Activated CD4-positive, alpha-beta memory T cell treated with anti-CD3 and anti-CD28 coated beads for 36 hours (primary cell): ENCODE measurements at regions of chr15 and their contacts with region 1.

Region 1: DNA sequence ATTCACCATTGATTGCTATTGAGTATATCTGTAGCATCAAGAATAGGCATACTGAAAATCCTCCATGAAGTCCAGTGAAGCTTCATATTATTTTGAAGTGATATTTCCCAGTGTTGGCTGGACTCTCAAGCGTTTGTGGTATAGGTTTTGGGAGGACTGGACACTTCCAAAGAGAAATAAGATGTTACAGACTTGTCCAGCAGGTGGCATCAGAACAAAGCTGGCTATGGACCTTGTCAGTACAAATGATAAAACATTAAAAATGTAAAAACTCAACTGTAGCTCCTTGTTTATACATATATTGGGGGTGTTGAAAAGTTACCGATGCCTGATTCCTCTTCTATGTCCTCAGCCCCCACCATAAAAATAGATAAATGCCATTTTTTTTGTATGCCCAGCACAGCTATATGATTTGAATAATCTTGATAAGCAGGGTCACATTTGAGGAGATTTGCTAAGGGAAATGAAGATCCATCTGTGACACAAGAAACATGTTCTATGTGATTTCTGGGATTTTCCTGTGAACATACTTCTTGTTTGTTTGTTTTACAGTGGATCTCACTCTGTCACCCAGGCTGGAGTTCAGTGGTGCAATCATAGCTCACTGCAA is 54.5 kb upstream of the GOLGA6B start:
- DNase-seq: peak; percentile 21
- H3K4me3 Mint-ChIP-seq: no peak overlapping the region
- H3K27ac Mint-ChIP-seq: no peak overlapping the region
- H3K4me1 Mint-ChIP-seq: no peaks in the 10 kb centered on the region
- H3K27me3 Mint-ChIP-seq: no peaks in the 10 kb centered on the region

Region 2: GRCh38 chr15:72584006-72584405 is 16.0 kb before region 1 on chr15:
- CTCF ChIA-PET with region 1: interaction called, 33 read pairs
- POLR2A ChIA-PET with region 1: no interaction called
- intact Hi-C with region 1: no loop called
- DNase-seq: no peak
- H3K4me3 Mint-ChIP-seq: no peak overlapping the region
- H3K27ac Mint-ChIP-seq: no peak overlapping the region
- H3K4me1 Mint-ChIP-seq: no peaks in the 10 kb centered on the region
- H3K27me3 Mint-ChIP-seq: no peaks in the 10 kb centered on the region

Region 3: DNA sequence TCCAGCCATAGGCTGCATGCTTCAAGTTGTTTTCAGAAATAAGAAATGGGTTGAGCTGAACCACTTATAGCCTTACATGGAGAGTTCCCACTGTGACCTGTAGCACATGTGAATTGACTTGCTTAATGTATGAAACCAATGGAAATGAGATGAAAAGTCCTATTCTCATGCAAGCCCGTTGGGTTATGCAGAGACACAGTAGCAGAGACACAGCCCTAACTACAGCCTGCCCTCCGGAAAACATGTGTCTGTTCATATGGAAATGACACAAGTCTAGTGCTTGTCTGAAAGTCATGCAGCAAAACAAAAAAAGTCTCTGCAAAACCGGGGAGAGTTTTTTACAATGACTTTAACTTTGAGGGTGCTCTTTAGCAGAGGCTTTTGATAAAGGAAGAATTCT is 71.6 kb after region 1 on chr15:
- CTCF ChIA-PET with region 1: interaction called, 34 read pairs
- POLR2A ChIA-PET with region 1: no interaction called
- intact Hi-C with region 1: loop called (anchors 5 kb)
- DNase-seq: no peak
- H3K4me3 Mint-ChIP-seq: no peak overlapping the region
- H3K27ac Mint-ChIP-seq: no peak overlapping the region
- H3K4me1 Mint-ChIP-seq: peaks cover 4% of the 10 kb centered on the region
- H3K27me3 Mint-ChIP-seq: peaks cover 12% of the 10 kb centered on the region